Naive thymus-derived CD4-positive, alpha-beta T cell (primary cell): ENCODE measurements at regions of chr18 and their contacts with region 1.

Region 1: GRCh38 chr18:13216092-13216582 is 2.4 kb upstream of the LDLRAD4 start:
- DNase-seq: peak; percentile 20 to 72 (median 62)
- ATAC-seq: peak; percentile 75
- H3K4me3 ChIP-seq: peak overlapping the region; percentile 48
- H3K4me3 Mint-ChIP-seq: peak overlapping the region; percentile 87 to 99 (median 94)
- H3K27ac ChIP-seq: peak overlapping the region; percentile 60
- H3K27ac Mint-ChIP-seq: peak overlapping the region in 8 of 9 donors; percentile 76 to 96 (median 88)
- H3K4me1 ChIP-seq: peaks cover 5 to 16% of the 10 kb centered on the region in 2 donors
- H3K4me1 Mint-ChIP-seq: peaks cover 14 to 38% (median 35%) of the 10 kb centered on the region in 7 donors
- H3K27me3 ChIP-seq: no peaks in the 10 kb centered on the region
- H3K27me3 Mint-ChIP-seq: peaks cover 0 to 50% (median 6%) of the 10 kb centered on the region in 5 donors

Region 2: GRCh38 chr18:12828116-12829051 is 387.8 kb before region 1 on chr18:
- CTCF ChIA-PET with region 1: no interaction called
- POLR2A ChIA-PET with region 1: no interaction called
- intact Hi-C with region 1: no loop called
- DNase-seq: no peak
- ATAC-seq: no peak
- H3K4me3 ChIP-seq: no peak overlapping the region
- H3K4me3 Mint-ChIP-seq: peak overlapping the region in 1 of 10 donors; percentile 24
- H3K27ac ChIP-seq: no peak overlapping the region
- H3K27ac Mint-ChIP-seq: peak overlapping the region in 1 of 9 donors; percentile 68
- H3K4me1 ChIP-seq: no peaks in the 10 kb centered on the region
- H3K4me1 Mint-ChIP-seq: peaks cover 3 to 36% (median 4%) of the 10 kb centered on the region in 7 donors
- H3K27me3 ChIP-seq: no peaks in the 10 kb centered on the region
- H3K27me3 Mint-ChIP-seq: no peaks in the 10 kb centered on the region

Region 3: GRCh38 chr18:13268158-13269012 is 52.2 kb after region 1 on chr18:
- CTCF ChIA-PET with region 1: interaction called, 8 read pairs
- POLR2A ChIA-PET with region 1: interaction called, 5 read pairs
- intact Hi-C with region 1: loop called (anchors 2 kb)
- DNase-seq: no peak
- ATAC-seq: no peak
- H3K4me3 ChIP-seq: no peak overlapping the region
- H3K4me3 Mint-ChIP-seq: peak overlapping the region in 8 of 10 donors; percentile 3 to 68 (median 26)
- H3K27ac ChIP-seq: no peak overlapping the region
- H3K27ac Mint-ChIP-seq: peak overlapping the region in 8 of 9 donors; percentile 65 to 89 (median 83)
- H3K4me1 ChIP-seq: peaks cover 0 to 49% of the 10 kb centered on the region in 2 donors
- H3K4me1 Mint-ChIP-seq: peaks cover 24 to 84% (median 65%) of the 10 kb centered on the region in 7 donors
- H3K27me3 ChIP-seq: no peaks in the 10 kb centered on the region
- H3K27me3 Mint-ChIP-seq: peaks cover 0 to 4% (median 0%) of the 10 kb centered on the region in 5 donors

Region 4: GRCh38 chr18:13381944-13382365 is 165.8 kb after region 1 on chr18:
- CTCF ChIA-PET with region 1: interaction called, 9 read pairs
- POLR2A ChIA-PET with region 1: interaction called, 7 read pairs
- intact Hi-C with region 1: loop called (anchors 1 to 2 kb)
- DNase-seq: peak in 7 of 9 donors; percentile 51 to 67 (median 62)
- ATAC-seq: peak; percentile 67
- H3K4me3 ChIP-seq: peak overlapping the region; percentile 57
- H3K4me3 Mint-ChIP-seq: peak overlapping the region; percentile 83 to 94 (median 92)
- H3K27ac ChIP-seq: peak overlapping the region; percentile 93
- H3K27ac Mint-ChIP-seq: peak overlapping the region; percentile 97 to 100 (median 99)
- H3K4me1 ChIP-seq: peaks cover 18 to 54% of the 10 kb centered on the region in 2 donors
- H3K4me1 Mint-ChIP-seq: peaks cover 41 to 83% (median 79%) of the 10 kb centered on the region in 7 donors
- H3K27me3 ChIP-seq: no peaks in the 10 kb centered on the region
- H3K27me3 Mint-ChIP-seq: no peaks in the 10 kb centered on the region

Region 5: GRCh38 chr18:13483316-13484270 is 267.5 kb after region 1 on chr18:
- CTCF ChIA-PET with region 1: interaction called, 3 read pairs
- POLR2A ChIA-PET with region 1: no interaction called
- intact Hi-C with region 1: loop called in 1 of 2 experiments (anchors 2 kb)
- DNase-seq: peak in 1 of 9 donors; percentile 27
- ATAC-seq: no peak
- H3K4me3 ChIP-seq: no peak overlapping the region
- H3K4me3 Mint-ChIP-seq: peak overlapping the region in 2 of 10 donors; percentile 16 to 44
- H3K27ac ChIP-seq: peak overlapping the region; percentile 50
- H3K27ac Mint-ChIP-seq: peak overlapping the region in 8 of 9 donors; percentile 81 to 94 (median 88)
- H3K4me1 ChIP-seq: no peaks in the 10 kb centered on the region
- H3K4me1 Mint-ChIP-seq: peaks cover 23 to 69% (median 43%) of the 10 kb centered on the region in 7 donors
- H3K27me3 ChIP-seq: no peaks in the 10 kb centered on the region
- H3K27me3 Mint-ChIP-seq: no peaks in the 10 kb centered on the region

Region 6: DNA sequence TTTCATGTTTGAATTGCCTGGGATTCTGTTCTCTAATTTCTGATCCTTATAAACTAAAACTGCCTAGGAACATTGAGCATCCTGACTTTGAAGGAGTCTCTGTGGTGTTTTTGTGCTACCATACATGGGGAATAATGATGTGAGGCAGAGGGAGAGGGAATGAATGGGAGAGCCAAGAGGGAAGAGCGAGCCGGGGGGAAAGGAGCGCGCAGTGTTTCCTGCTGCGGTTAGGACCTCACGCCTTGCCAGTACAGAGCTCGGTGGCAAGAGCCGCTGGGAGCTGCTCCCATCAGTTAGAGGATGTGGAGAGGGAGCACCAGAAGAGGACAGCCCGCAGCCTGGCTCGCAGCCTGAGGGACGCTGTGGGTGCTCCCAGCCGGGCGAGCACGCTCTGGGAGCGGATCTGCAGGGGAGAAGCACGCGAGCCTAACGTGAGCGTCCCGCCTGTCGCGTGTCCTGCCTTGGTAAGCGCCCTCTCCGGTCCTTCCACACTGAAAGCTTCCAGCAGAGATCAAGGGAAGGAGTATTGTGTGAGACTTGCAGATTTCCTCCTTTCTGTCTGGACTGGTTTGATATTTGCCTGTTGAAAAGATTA is 395.6 kb after region 1 on chr18:
- CTCF ChIA-PET with region 1: interaction called, 12 read pairs
- POLR2A ChIA-PET with region 1: interaction called, 3 read pairs
- intact Hi-C with region 1: loop called (anchors 1 kb)
- DNase-seq: peak in 3 of 9 donors; percentile 8 to 17 (median 11)
- ATAC-seq: peak; percentile 2
- H3K4me3 ChIP-seq: peak overlapping the region; percentile 36
- H3K4me3 Mint-ChIP-seq: peak overlapping the region; percentile 82 to 97 (median 90)
- H3K27ac ChIP-seq: peak overlapping the region; percentile 61
- H3K27ac Mint-ChIP-seq: peak overlapping the region; percentile 77 to 96 (median 86)
- H3K4me1 ChIP-seq: peaks cover 34 to 49% of the 10 kb centered on the region in 2 donors
- H3K4me1 Mint-ChIP-seq: peaks cover 55 to 82% (median 73%) of the 10 kb centered on the region in 7 donors
- H3K27me3 ChIP-seq: no peaks in the 10 kb centered on the region
- H3K27me3 Mint-ChIP-seq: no peaks in the 10 kb centered on the region

Region 7: GRCh38 chr18:13800505-13801259 is 584.5 kb after region 1 on chr18:
- CTCF ChIA-PET with region 1: no interaction called
- POLR2A ChIA-PET with region 1: no interaction called
- intact Hi-C with region 1: loop called (anchors 1 to 5 kb)
- DNase-seq: peak in 7 of 9 donors; percentile 6 to 54 (median 36)
- ATAC-seq: peak; percentile 54
- H3K4me3 ChIP-seq: no peak overlapping the region
- H3K4me3 Mint-ChIP-seq: peak overlapping the region in 9 of 10 donors; percentile 39 to 77 (median 66)
- H3K27ac ChIP-seq: no peak overlapping the region
- H3K27ac Mint-ChIP-seq: no peak overlapping the region
- H3K4me1 ChIP-seq: peaks cover 0 to 6% of the 10 kb centered on the region in 2 donors
- H3K4me1 Mint-ChIP-seq: peaks cover 3 to 9% (median 5%) of the 10 kb centered on the region in 7 donors
- H3K27me3 ChIP-seq: peaks cover 0 to 9% of the 10 kb centered on the region in 2 donors
- H3K27me3 Mint-ChIP-seq: peaks cover 67 to 76% (median 72%) of the 10 kb centered on the region in 5 donors